Naive thymus-derived CD4-positive, alpha-beta T cell (primary cell): ENCODE measurements at regions of chr6 and their contacts with region 1.

Region 1: DNA sequence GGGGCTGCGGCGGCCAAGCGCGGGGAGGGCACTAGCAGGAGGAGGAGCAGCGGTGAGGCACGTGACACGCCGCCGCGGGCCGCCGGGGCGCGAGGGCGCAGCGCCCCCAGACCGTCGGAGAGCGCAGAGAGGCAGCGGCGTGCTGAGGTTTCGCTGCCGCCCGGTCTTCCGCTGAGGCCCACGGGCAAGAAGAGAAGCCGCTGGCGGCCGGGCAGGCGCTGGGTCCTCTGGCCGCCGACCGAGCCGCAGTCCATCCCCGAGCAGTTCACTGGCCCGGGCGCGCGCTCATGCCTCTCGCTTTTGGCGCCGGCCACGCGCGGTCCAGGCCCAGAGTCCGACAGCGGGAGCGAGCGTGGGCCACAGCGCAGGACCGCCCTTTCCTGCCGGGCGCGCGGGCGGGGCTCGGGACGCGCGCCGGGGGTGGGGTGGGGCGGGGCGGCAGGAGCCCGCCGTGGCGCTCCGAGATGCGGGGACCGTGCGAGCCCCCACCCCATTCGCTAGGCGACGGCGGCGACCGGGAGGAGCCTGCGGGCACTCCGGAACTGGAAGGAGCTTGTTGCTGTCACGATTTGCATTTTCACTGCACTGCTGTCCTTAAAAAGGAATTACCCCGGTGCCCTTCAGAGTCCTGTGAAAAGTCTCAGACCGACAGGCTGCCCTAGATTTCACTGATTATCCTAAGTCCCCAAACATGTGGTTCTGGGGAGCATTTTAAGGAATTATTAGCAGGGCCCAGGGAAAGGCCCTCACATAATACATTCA is at the start of gene MCUR1:
- DNase-seq: peak; percentile 69 to 87 (median 76)
- ATAC-seq: peak; percentile 91
- H3K4me3 ChIP-seq: peak within 1 kb of the TSS; percentile 71
- H3K4me3 Mint-ChIP-seq: peak within 1 kb of the TSS; percentile 87 to 92 (median 90)
- H3K27ac ChIP-seq: peak within 1 kb of the TSS; percentile 82
- H3K27ac Mint-ChIP-seq: peak within 1 kb of the TSS; percentile 60 to 93 (median 85)
- H3K4me1 ChIP-seq: peaks cover 0 to 13% of the 10 kb centered on the region in 2 donors
- H3K4me1 Mint-ChIP-seq: peaks cover 17 to 40% (median 38%) of the 10 kb centered on the region in 7 donors
- H3K27me3 ChIP-seq: no peaks in the 10 kb centered on the region
- H3K27me3 Mint-ChIP-seq: peaks cover 0 to 25% (median 0%) of the 10 kb centered on the region in 5 donors
- total RNA-seq, gene MCUR1: 5.7 to 20.6 (median 10.0) TPM

Region 2: GRCh38 chr6:13767121-13767808 is 47.1 kb before region 1 on chr6:
- CTCF ChIA-PET with region 1: no interaction called
- POLR2A ChIA-PET with region 1: no interaction called
- intact Hi-C with region 1: loop called in 1 of 2 experiments (anchors 2 kb)
- DNase-seq: peak in 8 of 9 donors; percentile 12 to 48 (median 30)
- ATAC-seq: peak; percentile 66
- H3K4me3 ChIP-seq: peak overlapping the region; percentile 51
- H3K4me3 Mint-ChIP-seq: peak overlapping the region; percentile 53 to 86 (median 76)
- H3K27ac ChIP-seq: no peak overlapping the region
- H3K27ac Mint-ChIP-seq: peak overlapping the region in 7 of 9 donors; percentile 6 to 92 (median 59)
- H3K4me1 ChIP-seq: peaks cover 8 to 13% of the 10 kb centered on the region in 2 donors
- H3K4me1 Mint-ChIP-seq: peaks cover 10 to 49% (median 30%) of the 10 kb centered on the region in 7 donors
- H3K27me3 ChIP-seq: no peaks in the 10 kb centered on the region
- H3K27me3 Mint-ChIP-seq: peaks cover 0 to 6% (median 0%) of the 10 kb centered on the region in 5 donors

Region 3: GRCh38 chr6:13873285-13874190 is 59.2 kb after region 1 on chr6:
- CTCF ChIA-PET with region 1: no interaction called
- POLR2A ChIA-PET with region 1: no interaction called
- intact Hi-C with region 1: loop called in 1 of 2 experiments (anchors 2 kb)
- DNase-seq: peak; percentile 41 to 75 (median 66)
- ATAC-seq: peak; percentile 88
- H3K4me3 ChIP-seq: peak overlapping the region; percentile 59
- H3K4me3 Mint-ChIP-seq: peak overlapping the region; percentile 76 to 92 (median 85)
- H3K27ac ChIP-seq: peak overlapping the region; percentile 2
- H3K27ac Mint-ChIP-seq: peak overlapping the region in 5 of 9 donors; percentile 3 to 60 (median 38)
- H3K4me1 ChIP-seq: peaks cover 0 to 4% of the 10 kb centered on the region in 2 donors
- H3K4me1 Mint-ChIP-seq: peaks cover 9 to 20% (median 17%) of the 10 kb centered on the region in 7 donors
- H3K27me3 ChIP-seq: no peaks in the 10 kb centered on the region
- H3K27me3 Mint-ChIP-seq: peaks cover 2 to 14% (median 7%) of the 10 kb centered on the region in 5 donors

Region 4: DNA sequence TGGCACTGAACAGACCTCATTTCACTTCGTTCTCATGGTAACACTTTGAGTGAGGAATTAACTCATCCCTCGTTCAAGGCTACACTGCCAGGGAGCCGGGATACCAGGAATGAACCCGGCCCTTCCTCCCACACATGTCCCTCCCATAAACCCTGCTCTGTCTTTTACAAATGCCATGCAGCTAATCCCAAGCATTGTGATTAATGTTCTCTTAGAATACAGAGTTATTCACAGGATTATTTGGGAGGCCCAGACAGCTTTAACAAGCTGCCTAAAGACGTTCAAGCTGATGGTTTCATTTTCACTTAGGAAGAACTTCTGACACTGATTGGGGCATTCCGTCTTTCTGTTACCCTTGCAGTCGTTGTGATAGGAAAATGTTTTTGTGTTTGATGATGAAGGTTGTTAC is 260.7 kb after region 1 on chr6:
- CTCF ChIA-PET with region 1: no interaction called
- POLR2A ChIA-PET with region 1: no interaction called
- intact Hi-C with region 1: loop called (anchors 1 kb)
- DNase-seq: peak in 7 of 9 donors; percentile 46 to 71 (median 61)
- ATAC-seq: peak; percentile 93
- H3K4me3 ChIP-seq: peak overlapping the region; percentile 57
- H3K4me3 Mint-ChIP-seq: peak overlapping the region; percentile 72 to 92 (median 82)
- H3K27ac ChIP-seq: peak overlapping the region; percentile 84
- H3K27ac Mint-ChIP-seq: peak overlapping the region; percentile 87 to 99 (median 95)
- H3K4me1 ChIP-seq: peaks cover 5 to 7% of the 10 kb centered on the region in 2 donors
- H3K4me1 Mint-ChIP-seq: peaks cover 16 to 47% (median 27%) of the 10 kb centered on the region in 7 donors
- H3K27me3 ChIP-seq: no peaks in the 10 kb centered on the region
- H3K27me3 Mint-ChIP-seq: no peaks in the 10 kb centered on the region

Region 5: DNA sequence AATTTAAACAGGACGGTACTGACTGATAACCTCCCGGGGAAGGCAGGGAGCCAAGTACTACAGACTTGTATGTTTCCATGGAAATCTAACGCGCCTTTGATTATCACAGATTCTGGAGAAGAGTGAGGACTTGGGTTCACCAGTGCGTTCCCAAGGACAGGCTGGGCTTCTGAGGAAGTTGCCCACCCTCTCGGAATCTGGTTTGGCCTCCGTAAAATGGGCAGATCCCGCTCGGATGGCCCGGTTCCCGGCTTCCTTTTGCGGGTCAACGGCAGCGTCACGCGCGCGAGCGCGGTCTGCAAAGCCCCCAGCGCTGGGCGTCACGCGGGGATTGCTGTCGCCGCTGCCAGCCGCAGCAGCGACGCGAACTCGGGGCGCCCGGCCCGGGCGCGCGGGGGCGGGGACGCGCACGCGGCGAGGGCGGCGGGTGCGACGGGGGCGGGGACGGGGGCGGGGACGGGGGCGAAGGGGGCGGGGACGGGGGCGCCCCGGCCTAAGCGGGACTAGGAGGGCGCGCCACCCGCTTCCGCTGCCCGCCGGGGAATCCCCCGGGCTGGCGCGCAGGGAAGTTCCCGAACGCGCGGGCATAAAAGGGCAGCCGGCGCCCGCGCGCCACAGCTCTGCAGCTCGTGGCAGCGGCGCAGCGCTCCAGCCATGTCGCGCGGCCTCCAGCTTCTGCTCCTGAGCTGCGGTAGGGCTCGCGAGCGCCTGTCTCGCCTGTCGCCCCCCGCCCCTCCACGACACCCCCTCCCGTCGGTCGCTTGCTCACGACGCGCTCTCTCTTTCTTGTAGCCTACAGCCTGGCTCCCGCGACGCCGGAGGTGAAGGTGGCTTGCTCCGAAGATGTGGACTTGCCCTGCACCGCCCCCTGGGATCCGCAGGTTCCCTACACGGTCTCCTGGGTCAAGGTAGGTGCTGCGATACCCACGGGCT is 303.1 kb after region 1 on chr6 and contains the start of gene CD83:
- CTCF ChIA-PET with region 1: no interaction called
- POLR2A ChIA-PET with region 1: no interaction called
- intact Hi-C with region 1: loop called (anchors 1 kb)
- DNase-seq: peak; percentile 79 to 89 (median 84)
- ATAC-seq: peak; percentile 94
- H3K4me3 ChIP-seq: peak within 1 kb of the TSS; percentile 91
- H3K4me3 Mint-ChIP-seq: peak within 1 kb of the TSS; percentile 87 to 97 (median 93)
- H3K27ac ChIP-seq: peak within 1 kb of the TSS; percentile 87
- H3K27ac Mint-ChIP-seq: peak within 1 kb of the TSS; percentile 91 to 96 (median 94)
- H3K4me1 ChIP-seq: peaks cover 11 to 15% of the 10 kb centered on the region in 2 donors
- H3K4me1 Mint-ChIP-seq: peaks cover 18 to 41% (median 28%) of the 10 kb centered on the region in 7 donors
- H3K27me3 ChIP-seq: no peaks in the 10 kb centered on the region
- H3K27me3 Mint-ChIP-seq: peaks cover 0 to 35% (median 0%) of the 10 kb centered on the region in 5 donors
- total RNA-seq, gene CD83: 5.0 to 113 (median 18.3) TPM

Region 6: DNA sequence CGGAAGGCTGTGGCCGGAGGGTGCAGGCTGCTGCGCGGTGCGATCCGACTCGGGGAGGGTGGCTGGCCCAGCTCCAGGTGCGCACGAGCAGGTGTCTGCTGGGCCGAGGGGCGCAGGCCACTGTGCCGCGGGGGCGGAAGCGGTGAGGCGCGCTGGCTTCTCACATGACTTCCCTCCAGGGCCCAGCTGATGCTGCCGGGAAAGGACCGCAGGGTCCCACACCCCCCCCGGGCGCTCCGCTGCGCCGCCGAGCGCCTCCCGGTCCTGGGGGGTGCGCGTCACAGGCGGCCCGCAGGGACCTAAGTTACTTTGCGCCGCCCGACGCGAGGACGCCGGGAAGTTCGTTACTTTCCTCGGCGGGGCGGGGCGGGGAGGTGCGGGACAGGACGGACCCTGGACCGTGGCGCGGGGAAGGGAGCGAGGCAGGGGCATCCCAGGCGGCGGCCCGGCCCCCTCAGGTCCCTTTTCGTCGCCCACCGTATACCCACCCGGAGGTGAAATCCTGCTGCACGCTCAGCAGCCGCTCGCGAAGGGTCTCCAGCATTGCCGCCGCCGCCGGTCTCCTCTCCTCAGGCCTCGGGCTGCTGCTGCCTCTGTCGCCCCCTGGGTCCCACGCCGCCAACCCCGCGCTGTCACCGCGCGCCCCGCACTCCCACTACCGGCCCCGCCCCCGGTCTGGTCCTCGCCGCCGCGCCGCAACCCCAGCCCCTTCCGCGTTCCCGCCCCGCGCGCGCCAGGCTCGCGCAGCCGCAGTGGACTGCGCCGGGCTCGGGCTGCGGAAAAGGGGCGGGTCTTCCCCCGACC is 1848.2 kb after region 1 on chr6 and contains the start of gene DTNBP1:
- CTCF ChIA-PET with region 1: no interaction called
- POLR2A ChIA-PET with region 1: no interaction called
- intact Hi-C with region 1: loop called (anchors 5 kb)
- DNase-seq: peak; percentile 74 to 93 (median 84)
- ATAC-seq: peak; percentile 90
- H3K4me3 ChIP-seq: peak within 1 kb of the TSS; percentile 82
- H3K4me3 Mint-ChIP-seq: peak within 1 kb of the TSS; percentile 75 to 93 (median 88)
- H3K27ac ChIP-seq: peak within 1 kb of the TSS; percentile 71
- H3K27ac Mint-ChIP-seq: peak within 1 kb of the TSS; percentile 71 to 90 (median 82)
- H3K4me1 ChIP-seq: peaks cover 11 to 20% of the 10 kb centered on the region in 2 donors
- H3K4me1 Mint-ChIP-seq: peaks cover 20 to 47% (median 39%) of the 10 kb centered on the region in 7 donors
- H3K27me3 ChIP-seq: no peaks in the 10 kb centered on the region
- H3K27me3 Mint-ChIP-seq: peaks cover 0 to 20% (median 4%) of the 10 kb centered on the region in 5 donors
- total RNA-seq, gene DTNBP1: 19.8 to 30.8 (median 25.3) TPM